Adrenal gland (tissue), 19 donors: ENCODE measurements at regions of chr1 and their contacts with region 1.

Region 1: DNA sequence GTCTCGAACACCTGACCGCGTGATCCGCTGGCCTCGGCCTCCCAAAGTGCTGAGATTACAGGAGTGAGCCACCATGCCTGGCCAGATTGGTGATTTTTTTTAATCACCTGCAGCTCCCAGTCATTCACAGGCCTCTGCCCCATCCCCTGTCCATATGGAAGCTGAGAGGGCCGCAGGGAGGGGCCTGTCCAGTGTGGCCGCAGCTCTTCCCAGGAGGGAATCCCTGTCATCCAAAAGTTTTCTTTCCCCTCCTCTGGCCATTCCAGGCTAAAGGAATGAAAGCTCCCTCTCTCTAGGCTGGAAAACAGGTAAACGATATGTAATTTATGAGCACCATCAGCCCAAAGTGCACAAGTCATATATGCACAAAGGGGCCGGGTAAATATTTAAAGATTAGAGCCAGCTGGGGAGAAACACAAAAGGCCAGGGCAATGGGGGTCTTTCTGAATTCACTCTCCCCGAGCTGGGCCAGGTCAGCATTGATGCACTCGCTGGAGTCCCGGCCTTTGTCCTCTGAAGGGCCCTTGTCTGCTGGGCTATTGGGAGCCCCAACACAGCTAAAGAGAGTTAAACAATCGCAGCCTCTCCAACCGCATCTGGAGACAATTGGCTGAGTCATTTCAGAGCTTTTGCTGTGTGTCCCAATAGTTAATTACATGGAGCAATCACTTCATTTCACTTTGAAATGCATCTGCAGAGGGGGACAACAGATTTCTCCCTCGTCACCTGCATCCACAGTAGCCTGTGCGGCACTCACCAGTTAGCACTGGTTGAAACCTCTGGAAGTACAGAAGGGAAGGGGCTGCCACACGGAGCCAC is 3.8 kb upstream of the HES3 start:
- DNase-seq: no peak
- H3K4me3 ChIP-seq: no peak overlapping the region
- H3K27ac ChIP-seq: no peak overlapping the region
- H3K4me1 ChIP-seq: peaks cover 7 to 14% of the 10 kb centered on the region in 2 donors
- H3K27me3 ChIP-seq: peaks cover 41% of the 10 kb centered on the region
- CTCF ChIP-seq: no peak
- POLR2A ChIP-seq: no peak

Region 2: GRCh38 chr1:6059866-6060265 is 180.3 kb before region 1 on chr1:
- intact Hi-C with region 1: loop called in 1 of 2 experiments (anchors 5 kb)
- DNase-seq: peak in 6 of 7 donors; percentile 27 to 67 (median 39)
- H3K4me3 ChIP-seq: no peak overlapping the region
- H3K27ac ChIP-seq: no peak overlapping the region
- H3K4me1 ChIP-seq: peaks cover 0 to 21% of the 10 kb centered on the region in 2 donors
- H3K27me3 ChIP-seq: no peaks in the 10 kb centered on the region
- CTCF ChIP-seq: no peak
- POLR2A ChIP-seq: no peak

Region 3: DNA sequence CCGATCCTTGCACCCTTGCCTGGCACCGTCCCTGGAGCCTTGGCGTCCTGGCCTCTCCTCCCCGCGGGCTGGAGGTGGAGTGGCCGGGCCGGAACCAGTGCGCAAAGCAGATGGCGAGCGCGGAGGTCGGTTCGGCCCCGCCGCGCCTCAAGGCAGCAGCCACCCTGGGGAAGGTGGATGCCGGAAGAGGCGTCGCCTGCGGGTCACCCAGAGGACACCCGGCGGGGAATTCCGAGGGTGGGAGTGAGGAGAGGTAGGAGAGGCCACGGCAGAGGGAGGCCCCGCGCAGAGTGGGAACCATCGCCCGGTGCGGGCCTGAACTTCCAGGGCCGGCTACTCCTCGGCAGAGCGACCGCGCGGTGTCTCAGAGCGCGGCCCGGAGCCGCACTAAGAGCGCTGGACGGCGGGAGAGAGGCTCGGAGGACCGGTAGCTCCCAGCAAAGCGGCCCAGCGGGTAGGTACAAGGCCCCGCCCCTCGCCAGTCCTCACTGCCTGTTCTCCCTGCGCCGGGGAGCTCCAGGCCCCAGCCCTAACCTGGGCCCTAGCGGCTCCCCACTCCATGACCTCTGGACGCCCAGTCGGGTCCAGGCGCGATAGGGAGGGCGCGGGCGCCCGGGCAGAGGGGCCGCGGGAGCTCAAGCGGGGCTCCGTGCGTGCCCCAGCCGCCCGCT is 34.2 kb before region 1 on chr1 and contains the start of gene RNF207:
- intact Hi-C with region 1: loop called (anchors 5 kb)
- DNase-seq: peak in 6 of 7 donors; percentile 32 to 65 (median 52)
- H3K4me3 ChIP-seq: peak within 1 kb of the TSS in 2 of 4 donors; percentile 8 to 53
- H3K27ac ChIP-seq: peak within 1 kb of the TSS in 3 of 5 donors; percentile 28 to 79 (median 52)
- H3K4me1 ChIP-seq: peaks cover 15 to 32% of the 10 kb centered on the region in 2 donors
- H3K27me3 ChIP-seq: no peaks in the 10 kb centered on the region
- CTCF ChIP-seq: no peak
- POLR2A ChIP-seq: peak in 1 of 2 donors; percentile 25
- total RNA-seq, gene RNF207: 2.2 to 16.5 (median 10.8) TPM

Region 4: GRCh38 chr1:6393400-6394187 is 153.4 kb after region 1 on chr1 and contains the start of gene ACOT7:
- intact Hi-C with region 1: no loop called
- DNase-seq: peak; percentile 85 to 91 (median 89)
- H3K4me3 ChIP-seq: peak within 1 kb of the TSS in 2 of 4 donors; percentile 41 to 94
- H3K27ac ChIP-seq: peak within 1 kb of the TSS; percentile 90 to 100 (median 99)
- H3K4me1 ChIP-seq: peaks cover 17 to 20% of the 10 kb centered on the region in 2 donors
- H3K27me3 ChIP-seq: no peaks in the 10 kb centered on the region
- CTCF ChIP-seq: peak in 1 of 6 experiments; percentile 16
- POLR2A ChIP-seq: peak; percentile 36 to 86
- total RNA-seq, gene ACOT7: 8.4 to 29.4 (median 15.0) TPM